Left cardiac atrium (tissue), 4 donors: ENCODE measurements at regions of chr22 and their contacts with region 1.

Region 1: GRCh38 chr22:24106385-24107381 is 74.6 kb upstream of the SUSD2 start:
- DNase-seq: no peak
- ATAC-seq: peak; percentile 16 to 45

Region 2: GRCh38 chr22:24161909-24162308 is 55.2 kb after region 1 on chr22:
- intact Hi-C with region 1: loop called in 1 of 2 experiments (anchors 5 kb)
- DNase-seq: no peak
- ATAC-seq: no peak

Region 3: DNA sequence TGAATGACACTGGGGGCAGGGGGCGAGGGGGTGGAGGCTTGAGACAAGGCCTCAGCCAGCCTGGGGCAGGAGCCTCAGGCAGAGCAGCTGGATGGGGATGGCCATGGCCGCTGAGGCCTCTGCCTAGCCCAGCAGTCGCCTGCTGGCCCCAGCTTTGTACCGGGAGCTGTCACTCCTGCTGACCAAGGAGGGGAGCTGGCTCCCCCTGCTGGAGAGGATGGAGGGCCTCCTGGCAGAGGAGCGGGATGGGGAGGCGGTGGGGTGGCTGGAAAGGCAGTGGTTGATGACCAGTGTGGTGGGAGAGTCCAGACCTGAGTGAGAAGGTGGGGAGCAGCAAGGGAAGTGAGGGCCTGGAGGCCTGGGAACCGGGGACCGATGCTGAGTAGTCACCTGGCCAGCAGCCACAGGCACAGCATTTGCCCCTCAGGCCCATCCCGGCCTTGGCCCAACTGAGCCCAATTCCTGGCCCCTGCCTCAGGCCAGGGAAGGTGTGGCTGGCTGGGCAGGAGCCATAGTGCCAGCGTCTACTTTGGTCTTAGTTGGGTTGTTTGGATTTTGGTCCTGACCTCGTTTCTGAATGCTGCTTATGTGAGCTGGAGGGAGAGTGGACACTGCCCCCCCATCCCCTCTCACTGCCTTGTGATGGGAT is 68.6 kb after region 1 on chr22:
- intact Hi-C with region 1: loop called in 1 of 2 experiments (anchors 5 kb)
- DNase-seq: peak; percentile 89
- ATAC-seq: peak; percentile 69 to 73

Region 4: GRCh38 chr22:24208012-24208749 is 101.5 kb after region 1 on chr22:
- intact Hi-C with region 1: no loop called
- DNase-seq: peak; percentile 55
- ATAC-seq: peak; percentile 93 to 96

Region 5: GRCh38 chr22:24423519-24424000 is 316.9 kb after region 1 on chr22:
- intact Hi-C with region 1: no loop called
- DNase-seq: peak; percentile 73
- ATAC-seq: peak; percentile 78 to 81